AG04450 (cell line): ENCODE measurements at regions of chr10 and their contacts with region 1.

Region 1: DNA sequence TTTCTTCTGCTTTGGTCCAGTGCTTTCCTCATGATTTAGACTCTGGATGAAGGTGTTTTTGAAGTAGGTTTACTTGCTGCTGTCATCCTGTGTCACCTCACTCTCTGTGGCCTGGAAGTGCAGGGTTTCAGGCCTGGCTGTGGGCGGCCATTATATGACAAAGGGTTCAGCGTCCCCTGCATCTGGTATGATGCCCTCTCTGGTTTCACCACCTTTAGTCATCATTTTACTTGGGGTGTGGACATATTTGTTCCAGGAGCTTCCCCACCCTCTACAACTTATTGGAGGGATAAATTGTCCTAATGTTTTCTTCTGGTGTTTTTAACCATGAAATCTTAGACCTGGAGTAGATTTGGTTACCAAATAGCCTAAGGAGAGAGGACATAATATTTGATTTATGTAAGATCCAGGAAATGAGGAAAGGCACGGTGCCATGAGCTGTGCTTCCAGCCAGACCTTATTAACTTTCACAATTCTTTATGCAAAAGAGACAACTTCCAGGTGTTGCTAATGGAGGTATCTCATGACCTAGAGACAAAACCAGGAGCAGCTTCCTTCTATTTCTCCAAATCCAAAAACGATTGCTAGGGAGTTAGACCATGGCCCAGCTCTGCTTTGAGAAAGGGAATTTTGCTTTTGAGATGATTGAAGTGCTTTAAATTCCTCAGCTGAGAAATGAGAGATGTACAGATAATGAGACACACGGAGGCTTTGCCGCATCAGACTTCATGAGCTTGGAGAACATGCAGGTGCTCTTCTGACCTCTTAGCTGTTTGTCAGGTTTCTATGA is 20.8 kb downstream of the WBP1L start:
- DNase-seq: no peak
- H3K4me3 ChIP-seq: no peak overlapping the region
- H3K27ac ChIP-seq: no peak overlapping the region
- H3K27me3 ChIP-seq: no peaks in the 10 kb centered on the region
- CTCF ChIP-seq: no peak

Region 2: GRCh38 chr10:102752934-102753664 is 11.5 kb before region 1 on chr10:
- CTCF ChIA-PET with region 1: interaction called, 27 read pairs
- POLR2A ChIA-PET with region 1: interaction called, 3 read pairs
- DNase-seq: peak; percentile 59
- H3K4me3 ChIP-seq: no peak overlapping the region
- H3K27ac ChIP-seq: peak overlapping the region; percentile 52
- H3K27me3 ChIP-seq: no peaks in the 10 kb centered on the region
- CTCF ChIP-seq: peak; percentile 75

Region 3: GRCh38 chr10:102785621-102786217 is 21.1 kb after region 1 on chr10:
- CTCF ChIA-PET with region 1: no interaction called
- POLR2A ChIA-PET with region 1: no interaction called
- DNase-seq: no peak
- H3K4me3 ChIP-seq: no peak overlapping the region
- H3K27ac ChIP-seq: no peak overlapping the region
- H3K27me3 ChIP-seq: peaks cover 2% of the 10 kb centered on the region
- CTCF ChIP-seq: no peak

Region 4: DNA sequence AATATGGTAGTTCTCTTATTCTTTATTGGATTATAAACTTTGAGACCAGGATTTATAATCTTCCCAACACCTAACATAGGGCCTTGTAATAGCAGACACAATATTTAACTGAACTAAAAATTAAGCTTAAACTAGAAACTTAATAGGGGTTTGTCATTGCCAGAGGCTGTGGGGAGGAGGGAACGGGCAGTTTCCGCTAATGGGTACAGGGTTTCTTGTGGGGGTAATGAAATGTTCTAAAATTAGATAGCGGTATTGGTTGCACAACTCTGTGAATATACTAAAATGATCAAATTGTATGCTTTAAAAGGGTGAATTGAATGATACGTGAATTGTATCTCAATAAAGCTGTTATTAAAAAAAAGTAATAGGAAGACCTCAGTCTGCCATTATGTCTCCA is 383.1 kb after region 1 on chr10:
- CTCF ChIA-PET with region 1: interaction called, 11 read pairs
- POLR2A ChIA-PET with region 1: no interaction called
- DNase-seq: no peak
- H3K4me3 ChIP-seq: no peak overlapping the region
- H3K27ac ChIP-seq: no peak overlapping the region
- H3K27me3 ChIP-seq: no peaks in the 10 kb centered on the region
- CTCF ChIP-seq: no peak